Heart left ventricle (tissue), 16 donors: ENCODE measurements at regions of chr2 and their contacts with region 1.

Region 1: DNA sequence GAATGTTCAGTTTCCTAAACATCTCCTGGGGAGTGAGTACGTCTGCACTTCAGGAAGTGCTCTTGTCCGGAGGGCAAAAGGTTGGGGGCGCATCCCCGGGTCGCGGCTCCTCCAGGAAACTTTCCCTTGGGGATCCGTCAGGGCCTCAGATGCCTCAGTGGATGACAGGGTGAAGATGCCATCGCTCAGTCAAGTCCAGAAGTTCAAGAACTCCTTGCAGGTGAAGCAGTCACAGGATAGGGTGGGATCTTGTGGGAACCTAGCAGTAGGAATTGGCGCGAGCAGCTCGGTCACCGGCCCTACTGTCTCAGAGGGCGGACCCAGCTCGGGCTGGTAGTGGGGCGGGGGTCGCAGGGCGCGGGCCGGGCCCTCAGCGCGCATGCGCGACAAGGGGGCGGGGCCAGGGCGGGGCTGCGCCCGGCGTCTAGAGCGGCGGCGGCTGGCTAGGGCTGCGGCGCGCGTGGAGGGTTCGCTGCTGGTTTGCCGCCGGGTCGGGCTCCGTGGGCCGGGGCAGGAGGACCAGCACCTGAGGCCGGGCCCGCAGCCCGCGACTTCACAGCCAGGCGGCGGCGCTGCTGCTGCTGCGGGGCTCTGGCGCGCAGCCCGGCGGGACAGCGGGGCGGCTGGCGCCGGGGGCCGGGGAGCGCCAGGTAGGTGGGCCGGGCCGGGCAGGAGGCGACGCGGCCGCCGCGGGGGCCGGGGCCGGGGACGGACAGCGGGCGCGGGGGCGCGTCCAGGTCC is at the start of gene INPP4A:
- DNase-seq: peak; percentile 77 to 91 (median 80)
- ATAC-seq: peak; percentile 74 to 96 (median 93)
- H3K4me3 ChIP-seq: peak within 1 kb of the TSS; percentile 51 to 98 (median 86)
- H3K27ac ChIP-seq: peak within 1 kb of the TSS; percentile 59 to 87 (median 76)
- H3K4me1 ChIP-seq: peaks cover 0 to 34% (median 17%) of the 10 kb centered on the region in 12 donors
- H3K27me3 ChIP-seq: no peaks in the 10 kb centered on the region
- CTCF ChIP-seq: peak in 4 of 12 donors; percentile 13 to 47 (median 34)
- POLR2A ChIP-seq: peak in 1 of 2 donors; percentile 79
- total RNA-seq, gene INPP4A: 15.2 to 30.5 (median 20.6) TPM

Region 2: DNA sequence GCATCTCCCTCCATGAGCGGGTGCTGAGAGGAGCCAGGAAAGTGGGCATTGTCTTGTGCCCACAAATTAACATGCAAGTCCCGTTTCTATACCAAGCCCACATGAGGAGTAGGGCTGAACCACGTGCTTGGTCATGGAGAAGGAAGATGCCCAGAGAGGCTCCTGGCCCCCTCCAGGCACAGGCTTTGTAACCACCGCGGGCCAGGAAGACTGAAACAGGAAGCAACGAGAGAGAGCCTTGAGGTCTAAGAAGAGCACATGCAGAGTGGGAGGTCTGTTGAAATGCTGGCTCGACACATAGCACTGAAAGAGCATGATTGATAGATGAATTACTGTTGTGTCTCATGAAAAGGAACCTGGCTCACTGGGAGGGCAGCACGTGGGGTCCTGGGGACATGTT is 321.3 kb before region 1 on chr2:
- intact Hi-C with region 1: no loop called
- DNase-seq: no peak
- ATAC-seq: no peak
- H3K4me3 ChIP-seq: no peak overlapping the region
- H3K27ac ChIP-seq: no peak overlapping the region
- H3K4me1 ChIP-seq: peaks cover 0 to 26% (median 4%) of the 10 kb centered on the region in 12 donors
- H3K27me3 ChIP-seq: peaks cover 0 to 3% (median 0%) of the 10 kb centered on the region in 9 donors
- CTCF ChIP-seq: no peak
- POLR2A ChIP-seq: no peak

Region 3: GRCh38 chr2:98426771-98427170 is 17.8 kb before region 1 on chr2:
- intact Hi-C with region 1: no loop called
- DNase-seq: no peak
- ATAC-seq: no peak
- H3K4me3 ChIP-seq: no peak overlapping the region
- H3K27ac ChIP-seq: no peak overlapping the region
- H3K4me1 ChIP-seq: no peaks in the 10 kb centered on the region
- H3K27me3 ChIP-seq: no peaks in the 10 kb centered on the region
- CTCF ChIP-seq: no peak
- POLR2A ChIP-seq: no peak

Region 4: DNA sequence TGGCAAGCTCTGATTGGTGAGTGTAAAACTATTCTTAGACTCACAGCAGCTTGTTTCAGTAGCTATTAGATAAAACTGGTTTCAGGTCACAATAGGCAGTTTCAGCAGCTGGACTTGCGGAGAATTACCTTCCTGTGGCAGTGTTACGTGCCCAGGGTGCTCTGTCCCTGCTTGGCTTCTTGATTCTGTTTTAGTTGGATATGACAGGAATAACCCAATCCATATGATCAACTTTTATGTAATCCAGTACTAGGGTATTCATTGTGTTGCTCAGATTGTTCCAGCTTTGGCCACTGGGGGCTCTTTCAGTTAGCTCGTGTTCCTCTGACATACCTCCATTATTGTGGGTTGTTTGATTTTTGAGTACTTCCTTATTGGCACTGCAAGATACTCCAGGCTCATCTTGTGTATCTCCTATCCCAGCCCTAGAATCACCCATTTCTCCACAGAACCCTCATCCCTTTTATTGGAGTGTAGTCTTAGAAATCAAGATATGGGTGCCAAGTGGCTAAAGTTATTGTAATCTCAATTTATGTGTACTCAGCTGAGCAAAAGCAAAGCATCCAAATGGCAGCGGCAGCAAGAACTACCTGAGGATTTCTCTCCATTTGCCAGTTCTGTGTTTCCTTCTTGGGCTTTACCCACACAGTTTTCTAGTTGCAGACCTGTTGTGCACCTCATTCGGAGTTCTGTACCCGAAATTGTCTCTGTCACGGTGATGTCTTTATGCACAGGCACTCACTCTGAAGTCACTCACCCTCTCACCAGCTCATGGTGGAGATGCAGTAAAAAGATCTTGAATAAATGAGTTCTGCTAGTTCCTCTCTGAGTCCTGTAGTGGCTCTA is 43.4 kb after region 1 on chr2:
- intact Hi-C with region 1: loop called in 2 of 10 experiments (anchors 5 kb)
- DNase-seq: no peak
- ATAC-seq: peak in 1 of 4 donors; percentile 37
- H3K4me3 ChIP-seq: no peak overlapping the region
- H3K27ac ChIP-seq: peak overlapping the region in 4 of 12 donors; percentile 5 to 54 (median 16)
- H3K4me1 ChIP-seq: peaks cover 0 to 86% (median 63%) of the 10 kb centered on the region in 12 donors
- H3K27me3 ChIP-seq: no peaks in the 10 kb centered on the region
- CTCF ChIP-seq: peak; percentile 9 to 54 (median 36)
- POLR2A ChIP-seq: no peak

Region 5: DNA sequence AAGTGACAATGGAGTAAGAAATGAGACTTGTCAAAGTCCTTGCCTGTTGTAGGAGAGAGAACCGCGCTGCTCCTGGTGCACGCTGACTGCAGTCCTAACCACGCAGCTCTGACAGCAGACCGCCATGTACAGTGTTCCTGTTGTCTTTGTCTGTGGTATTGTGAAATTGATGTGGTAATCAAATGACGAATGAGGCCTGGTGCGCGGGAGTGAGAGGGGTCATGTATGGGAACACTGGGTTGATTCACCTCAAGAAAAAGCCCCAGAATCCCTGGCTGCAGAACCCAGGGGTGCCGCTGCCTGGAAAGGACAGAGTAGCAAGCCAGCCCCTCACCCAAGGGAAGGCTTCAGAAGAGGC is 64.1 kb after region 1 on chr2:
- intact Hi-C with region 1: loop called in 4 of 10 experiments (anchors 5 to 10 kb)
- DNase-seq: peak in 3 of 5 donors; percentile 42 to 68 (median 64)
- ATAC-seq: peak; percentile 27 to 82 (median 74)
- H3K4me3 ChIP-seq: no peak overlapping the region
- H3K27ac ChIP-seq: peak overlapping the region in 11 of 12 donors; percentile 7 to 91 (median 57)
- H3K4me1 ChIP-seq: peaks cover 7 to 72% (median 45%) of the 10 kb centered on the region in 12 donors
- H3K27me3 ChIP-seq: no peaks in the 10 kb centered on the region
- CTCF ChIP-seq: no peak
- POLR2A ChIP-seq: no peak

Region 6: DNA sequence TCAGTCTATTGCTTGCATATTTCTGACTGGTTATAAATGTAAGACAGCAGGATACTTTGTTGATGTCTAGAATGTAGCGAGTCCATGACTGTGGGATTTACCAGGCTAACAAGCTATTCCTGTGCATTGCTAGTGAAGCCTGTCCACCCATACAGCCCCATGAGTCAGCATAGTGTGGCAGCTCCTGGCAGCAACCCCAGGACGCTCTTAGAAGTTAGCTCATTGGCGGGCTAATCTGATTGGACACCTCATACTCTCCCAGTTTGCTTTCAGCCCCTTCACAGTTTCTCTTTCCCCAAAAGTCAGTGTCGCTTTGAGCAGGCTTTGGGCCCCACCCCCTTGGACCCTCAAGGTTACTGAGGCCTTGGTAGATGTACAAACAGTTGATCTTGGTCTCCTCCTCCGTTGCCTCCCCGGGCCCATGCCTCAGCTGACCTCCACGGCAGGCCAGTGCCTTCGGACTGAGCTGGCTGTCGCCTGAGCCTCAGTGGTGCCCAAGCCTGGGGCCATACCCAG is 115.7 kb after region 1 on chr2:
- intact Hi-C with region 1: loop called in 2 of 10 experiments (anchors 5 to 10 kb)
- DNase-seq: peak in 4 of 5 donors; percentile 58 to 82 (median 72)
- ATAC-seq: peak; percentile 86 to 92 (median 90)
- H3K4me3 ChIP-seq: no peak overlapping the region
- H3K27ac ChIP-seq: peak overlapping the region in 11 of 12 donors; percentile 36 to 85 (median 62)
- H3K4me1 ChIP-seq: peaks cover 5 to 80% (median 45%) of the 10 kb centered on the region in 12 donors
- H3K27me3 ChIP-seq: no peaks in the 10 kb centered on the region
- CTCF ChIP-seq: no peak
- POLR2A ChIP-seq: no peak

Region 7: DNA sequence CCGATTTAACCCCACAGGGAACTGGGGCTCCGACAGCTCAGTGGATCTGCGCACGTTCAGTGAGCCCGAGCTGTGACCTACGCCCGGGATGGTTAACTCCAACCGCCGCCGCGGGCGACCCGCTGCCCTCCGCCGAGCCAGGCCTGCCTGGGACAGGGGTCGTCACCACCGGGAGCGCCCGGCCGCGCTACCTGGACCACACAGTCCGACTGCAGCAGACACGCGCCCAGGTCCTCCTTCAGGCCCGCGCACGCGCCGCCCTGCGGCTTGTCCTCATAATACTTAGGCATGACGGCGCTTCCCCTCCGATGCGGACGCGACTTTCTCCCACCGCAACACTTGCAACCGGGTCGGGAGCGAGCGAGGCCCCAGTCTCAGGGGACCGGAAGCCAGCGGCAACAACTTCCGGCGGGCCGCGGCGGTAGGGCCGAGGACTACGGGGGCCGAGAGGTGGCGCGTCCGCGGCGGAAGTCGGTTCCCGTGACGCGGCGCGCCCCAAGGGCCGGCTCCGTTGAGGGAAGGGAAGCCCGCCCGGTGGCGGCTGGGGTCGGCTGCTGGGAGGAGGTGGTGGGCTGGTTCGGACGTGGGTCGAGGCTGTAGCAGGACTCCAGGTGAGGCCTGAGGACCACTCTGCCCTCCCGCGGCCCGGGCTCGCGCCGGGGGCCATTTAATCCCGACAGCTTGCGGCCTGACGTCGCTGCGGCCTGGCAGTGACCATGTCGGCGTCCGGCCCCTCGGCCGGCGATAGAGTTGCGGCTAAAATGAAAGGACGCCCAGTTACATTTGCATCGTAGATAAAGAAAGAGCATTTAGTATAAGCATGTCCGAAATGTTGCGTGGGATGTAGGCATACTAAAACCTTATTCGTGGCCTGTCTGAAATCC is 163.8 kb after region 1 on chr2 and contains the starts of genes COA5 and UNC50:
- intact Hi-C with region 1: loop called in 2 of 10 experiments (anchors 10 kb)
- DNase-seq: peak; percentile 93 to 95 (median 94)
- ATAC-seq: peak; percentile 94 to 97 (median 96)
- H3K4me3 ChIP-seq: peak within 1 kb of the TSS; percentile 63 to 99 (median 87)
- H3K27ac ChIP-seq: peak within 1 kb of the TSS; percentile 89 to 100 (median 96)
- H3K4me1 ChIP-seq: peaks cover 12 to 66% (median 49%) of the 10 kb centered on the region in 12 donors
- H3K27me3 ChIP-seq: no peaks in the 10 kb centered on the region
- CTCF ChIP-seq: peak in 3 of 12 donors; percentile 23 to 27 (median 25)
- POLR2A ChIP-seq: peak in 1 of 2 donors; percentile 75
- total RNA-seq, gene COA5: 19.6 to 33.5 (median 27.7) TPM
- total RNA-seq, gene UNC50: 22.3 to 31.4 (median 25.6) TPM